ENCODE measurements at regions of chr3 and their contacts with region 1.

Region 1: DNA sequence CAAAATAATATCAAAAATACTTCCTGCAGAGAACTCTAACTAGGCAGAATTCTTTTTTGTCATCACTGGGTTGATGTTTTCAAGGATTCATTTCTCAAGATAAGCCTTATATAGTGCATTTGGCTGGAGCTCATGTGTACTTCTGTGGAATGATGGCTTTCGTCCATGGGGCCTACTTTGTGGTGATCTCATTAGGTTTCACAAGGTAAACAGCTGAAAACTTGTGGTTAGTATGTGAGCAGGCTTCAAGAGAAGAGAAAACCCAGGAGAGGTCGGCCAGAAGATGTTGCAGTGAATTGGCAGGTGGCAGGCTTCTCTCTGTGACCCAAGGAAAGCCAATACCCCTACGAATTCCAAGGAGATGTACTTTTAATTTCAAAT is 121.4 kb upstream of the PHLDB2 start:
- DNase-seq: peak; percentile 96
- ATAC-seq: peak; percentile 60
- H3K4me3 ChIP-seq: no peak overlapping the region
- H3K27ac ChIP-seq: peak overlapping the region; percentile 74
- H3K4me1 ChIP-seq: peaks cover 65% of the 10 kb centered on the region
- H3K27me3 ChIP-seq: no peaks in the 10 kb centered on the region
- CTCF ChIP-seq: no peak

Region 2: GRCh38 chr3:111700054-111700453 is 37.6 kb before region 1 on chr3:
- CTCF ChIA-PET with region 1: no interaction called
- POLR2A ChIA-PET with region 1: no interaction called
- intact Hi-C with region 1: no loop called
- DNase-seq: no peak
- ATAC-seq: no peak
- H3K4me3 ChIP-seq: no peak overlapping the region
- H3K27ac ChIP-seq: no peak overlapping the region
- H3K4me1 ChIP-seq: peaks cover 23% of the 10 kb centered on the region
- H3K27me3 ChIP-seq: no peaks in the 10 kb centered on the region
- CTCF ChIP-seq: no peak

Region 3: DNA sequence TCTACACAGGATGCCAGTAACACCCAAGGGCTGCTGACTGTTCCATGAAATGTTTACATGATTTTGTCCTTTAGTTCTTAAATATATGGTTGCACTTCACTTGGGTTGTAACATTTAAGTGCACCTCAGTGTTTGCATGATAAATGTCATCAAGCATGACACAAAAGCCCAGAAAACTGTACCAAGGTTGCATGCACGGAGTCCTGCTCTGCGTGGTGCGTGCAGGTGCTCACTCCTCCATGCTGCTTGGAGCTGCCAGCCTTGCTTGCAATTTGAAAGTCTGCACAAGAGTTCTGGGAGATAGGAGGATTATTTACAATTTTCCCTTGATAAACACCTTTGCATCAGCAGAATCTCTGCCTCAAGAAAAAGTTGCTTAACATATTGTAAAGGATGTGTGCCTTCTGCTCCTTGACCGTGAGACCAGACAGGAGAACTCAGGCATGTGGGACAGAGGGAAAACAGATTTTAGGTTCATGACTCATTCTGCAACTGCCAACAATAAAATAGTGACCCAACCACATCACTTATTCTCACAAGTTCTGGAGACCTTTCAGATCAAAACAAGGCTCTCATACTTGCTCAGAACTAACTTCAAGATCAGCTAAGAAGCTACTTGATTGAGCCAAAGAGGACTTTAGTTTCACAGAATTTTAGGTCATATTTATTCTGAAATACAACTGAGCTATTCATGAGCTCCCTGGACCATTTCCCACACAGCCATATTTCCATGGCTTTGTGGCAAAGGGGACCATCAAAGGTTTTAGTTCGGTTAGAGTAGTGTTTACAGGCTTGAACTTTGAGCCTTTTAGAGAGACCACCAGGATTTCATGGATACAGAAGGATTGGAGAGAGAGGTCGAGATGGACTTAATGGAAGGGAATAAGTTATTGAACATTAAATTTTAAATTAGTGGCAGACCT is 14.1 kb before region 1 on chr3:
- CTCF ChIA-PET with region 1: no interaction called
- POLR2A ChIA-PET with region 1: no interaction called
- intact Hi-C with region 1: loop called (anchors 1 kb)
- DNase-seq: peak; percentile 90
- ATAC-seq: peak; percentile 93
- H3K4me3 ChIP-seq: peak overlapping the region; percentile 5; the same call in 1 of the 2 replicates
- H3K27ac ChIP-seq: peak overlapping the region; percentile 64
- H3K4me1 ChIP-seq: peaks cover 32% of the 10 kb centered on the region
- H3K27me3 ChIP-seq: no peaks in the 10 kb centered on the region
- CTCF ChIP-seq: no peak

Region 4: GRCh38 chr3:111761309-111761831 is 23.7 kb after region 1 on chr3:
- CTCF ChIA-PET with region 1: interaction called, 5 read pairs
- POLR2A ChIA-PET with region 1: interaction called, 15 read pairs
- intact Hi-C with region 1: no loop called
- DNase-seq: peak; percentile 84
- ATAC-seq: peak; percentile 87
- H3K4me3 ChIP-seq: peak overlapping the region; percentile 25; the same call in 1 of the 2 replicates
- H3K27ac ChIP-seq: peak overlapping the region; percentile 66
- H3K4me1 ChIP-seq: peaks cover 47% of the 10 kb centered on the region
- H3K27me3 ChIP-seq: no peaks in the 10 kb centered on the region
- CTCF ChIP-seq: no peak

Region 5: DNA sequence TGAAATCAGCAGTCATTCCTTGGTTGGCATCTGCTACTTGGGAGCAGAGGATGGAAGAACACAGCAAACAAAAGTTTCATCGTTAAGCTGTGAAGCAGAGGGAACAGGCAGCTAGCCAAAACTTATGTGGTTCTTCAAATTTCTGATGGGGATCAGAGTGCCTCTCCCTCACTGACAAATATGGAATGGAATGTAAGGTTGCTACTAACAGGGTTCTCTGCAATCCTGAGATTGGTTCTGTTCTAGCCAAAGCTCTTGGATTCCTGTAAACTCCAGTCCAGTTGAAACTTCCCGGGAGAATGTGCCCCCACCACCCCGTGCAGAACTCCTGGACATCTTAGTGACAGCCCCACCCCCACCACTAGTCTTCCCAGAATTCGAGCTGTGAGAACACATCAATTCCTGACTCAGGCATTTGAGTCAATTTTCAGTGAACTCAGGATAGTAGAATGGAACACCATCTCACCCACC is 65.5 kb after region 1 on chr3:
- CTCF ChIA-PET with region 1: no interaction called
- POLR2A ChIA-PET with region 1: no interaction called
- intact Hi-C with region 1: loop called (anchors 1 kb)
- DNase-seq: peak; percentile 99
- ATAC-seq: peak; percentile 88
- H3K4me3 ChIP-seq: peak overlapping the region; percentile 29; the same call in 1 of the 2 replicates
- H3K27ac ChIP-seq: peak overlapping the region; percentile 97
- H3K4me1 ChIP-seq: peaks cover 46% of the 10 kb centered on the region
- H3K27me3 ChIP-seq: no peaks in the 10 kb centered on the region
- CTCF ChIP-seq: no peak

Region 6: GRCh38 chr3:111810909-111811308 is 73.2 kb after region 1 on chr3:
- CTCF ChIA-PET with region 1: no interaction called
- POLR2A ChIA-PET with region 1: interaction called, 15 read pairs
- intact Hi-C with region 1: no loop called
- DNase-seq: peak; percentile 98
- ATAC-seq: peak; percentile 80
- H3K4me3 ChIP-seq: peak overlapping the region; percentile 29; the same call in 1 of the 2 replicates
- H3K27ac ChIP-seq: peak overlapping the region; percentile 85
- H3K4me1 ChIP-seq: peaks cover 55% of the 10 kb centered on the region
- H3K27me3 ChIP-seq: no peaks in the 10 kb centered on the region
- CTCF ChIP-seq: no peak

Region 7: DNA sequence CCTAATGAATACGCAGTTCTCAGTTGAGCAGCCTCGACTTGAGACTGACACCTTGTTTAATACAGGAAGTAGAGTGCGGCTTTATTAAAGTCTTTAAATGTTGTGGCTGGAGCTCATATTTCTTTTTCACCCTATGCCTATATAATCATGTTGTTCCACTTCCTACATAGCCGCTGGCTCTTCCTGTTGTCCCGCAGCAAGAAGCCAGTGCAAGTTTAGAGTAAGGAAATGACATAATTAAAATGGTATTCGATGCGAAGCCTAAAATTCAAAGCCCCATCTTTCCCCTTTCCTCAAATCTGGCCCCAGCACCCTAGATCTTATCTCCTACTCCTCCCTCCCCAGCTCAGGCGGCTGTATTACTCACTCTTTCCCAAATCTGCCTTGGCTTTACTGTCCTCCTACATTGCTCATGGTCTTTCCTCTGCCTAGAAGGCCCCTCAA is 113.8 kb after region 1 on chr3:
- CTCF ChIA-PET with region 1: interaction called, 4 read pairs
- POLR2A ChIA-PET with region 1: no interaction called
- intact Hi-C with region 1: loop called (anchors 1 kb)
- DNase-seq: peak; percentile 97
- ATAC-seq: peak; percentile 69
- H3K4me3 ChIP-seq: peak overlapping the region; percentile 29; the same call in 1 of the 2 replicates
- H3K27ac ChIP-seq: peak overlapping the region; percentile 93
- H3K4me1 ChIP-seq: peaks cover 56% of the 10 kb centered on the region
- H3K27me3 ChIP-seq: no peaks in the 10 kb centered on the region
- CTCF ChIP-seq: no peak

Measured in PC-3 (cell line).